ENCODE measurements at regions of chr22 and their contacts with region 1.

Region 1: DNA sequence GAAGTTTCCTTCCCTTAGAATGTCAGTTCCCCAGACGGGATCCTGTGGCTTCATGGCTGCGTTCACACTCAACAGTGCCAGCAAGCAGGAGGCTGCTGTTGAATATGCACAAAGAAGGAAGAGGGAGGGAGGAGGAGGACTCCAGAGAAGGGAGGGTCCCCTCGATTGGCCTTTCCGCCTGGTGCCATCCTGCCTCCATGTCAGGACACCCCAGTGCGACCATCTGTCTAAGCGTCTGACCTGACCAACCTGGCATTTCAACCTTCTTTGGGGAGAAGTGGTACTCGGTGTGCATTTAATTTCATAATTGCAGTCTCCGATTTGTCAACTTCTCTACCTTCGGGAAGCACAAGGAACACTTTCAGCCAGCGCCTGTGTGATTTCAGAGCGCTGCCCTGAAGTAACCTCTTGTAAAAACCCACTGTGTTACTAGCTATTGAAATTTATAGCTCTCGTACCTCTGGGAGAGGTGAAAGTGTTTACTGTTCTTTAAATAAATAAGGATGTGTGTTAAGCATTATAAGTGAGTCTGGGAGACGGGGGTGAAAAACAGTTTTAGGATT is 1491.9 kb downstream of the TBC1D22A start:
- DNase-seq: no peak
- ATAC-seq: no peak
- H3K4me3 ChIP-seq: no peak overlapping the region
- H3K27ac ChIP-seq: no peak overlapping the region
- H3K4me1 ChIP-seq: no peaks in the 10 kb centered on the region
- H3K27me3 ChIP-seq: peaks cover 0 to 36% (median 4%) of the 10 kb centered on the region in 9 donors
- CTCF ChIP-seq: no peak
- POLR2A ChIP-seq: no peak

Region 2: GRCh38 chr22:48198489-48199459 is 55.6 kb before region 1 on chr22:
- intact Hi-C with region 1: loop called in 1 of 10 experiments (anchors 10 kb)
- DNase-seq: no peak
- ATAC-seq: no peak
- H3K4me3 ChIP-seq: no peak overlapping the region
- H3K27ac ChIP-seq: no peak overlapping the region
- H3K4me1 ChIP-seq: no peaks in the 10 kb centered on the region
- H3K27me3 ChIP-seq: peaks cover 0 to 14% (median 0%) of the 10 kb centered on the region in 9 donors
- CTCF ChIP-seq: no peak
- POLR2A ChIP-seq: no peak

Region 3: GRCh38 chr22:48306785-48307510 is 52.6 kb after region 1 on chr22:
- intact Hi-C with region 1: loop called in 1 of 10 experiments (anchors 5 kb)
- DNase-seq: no peak
- ATAC-seq: no peak
- H3K4me3 ChIP-seq: no peak overlapping the region
- H3K27ac ChIP-seq: no peak overlapping the region
- H3K4me1 ChIP-seq: no peaks in the 10 kb centered on the region
- H3K27me3 ChIP-seq: peaks cover 0 to 27% (median 0%) of the 10 kb centered on the region in 9 donors
- CTCF ChIP-seq: no peak
- POLR2A ChIP-seq: no peak

Region 4: GRCh38 chr22:48352086-48352911 is 97.9 kb after region 1 on chr22:
- intact Hi-C with region 1: no loop called
- DNase-seq: no peak
- ATAC-seq: no peak
- H3K4me3 ChIP-seq: no peak overlapping the region
- H3K27ac ChIP-seq: no peak overlapping the region
- H3K4me1 ChIP-seq: no peaks in the 10 kb centered on the region
- H3K27me3 ChIP-seq: peaks cover 0 to 45% (median 3%) of the 10 kb centered on the region in 9 donors
- CTCF ChIP-seq: no peak
- POLR2A ChIP-seq: no peak